Posterior vena cava (tissue), 2 donors: ENCODE measurements at regions of chr9 and their contacts with region 1.

Region 1: DNA sequence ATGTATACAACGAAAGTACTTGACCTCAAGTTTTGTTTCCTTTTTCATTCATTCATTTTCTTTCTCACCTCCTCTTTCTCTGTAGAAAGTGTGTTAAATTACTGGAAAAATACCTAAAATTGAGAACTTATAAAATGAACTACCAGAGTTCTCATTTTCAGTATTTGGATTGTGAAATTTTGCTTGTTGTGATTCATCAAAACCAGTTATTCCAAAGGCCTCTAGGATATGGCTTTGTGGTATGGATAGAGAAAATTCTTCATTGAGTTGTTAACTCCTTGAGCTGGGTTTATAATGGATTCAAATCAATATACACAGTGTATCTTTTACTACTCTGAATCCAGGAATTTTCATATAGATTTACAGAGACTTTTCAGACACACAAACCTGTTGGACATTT is 287.6 kb downstream of the KDM4C start:
- DNase-seq: no peak

Region 2: DNA sequence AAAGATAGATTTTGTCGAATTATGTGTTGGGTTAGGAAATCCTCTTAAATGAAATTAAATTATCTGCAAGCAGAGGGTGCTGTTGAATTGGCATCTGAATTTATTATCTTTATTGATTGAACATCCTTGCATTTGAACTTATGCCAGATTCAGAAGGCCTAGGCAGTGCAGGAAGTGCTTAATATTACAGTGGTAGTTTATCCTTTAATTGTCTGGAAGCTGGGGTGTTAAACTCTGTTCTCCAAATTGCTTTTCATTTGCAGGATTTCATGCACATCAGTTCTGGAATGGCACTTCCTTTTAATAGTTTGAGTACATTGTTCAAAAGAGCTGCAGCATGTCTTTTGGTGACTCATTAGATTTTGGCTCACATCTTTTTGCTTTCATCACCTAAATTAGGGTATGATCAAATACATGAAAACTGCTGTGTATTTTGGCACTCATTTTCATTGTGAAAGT is 101.2 kb before region 1 on chr9:
- intact Hi-C with region 1: no loop called
- DNase-seq: no peak

Region 3: GRCh38 chr9:7011395-7012067 is 33.8 kb before region 1 on chr9:
- intact Hi-C with region 1: no loop called
- DNase-seq: no peak

Region 4: GRCh38 chr9:7086389-7086788 is 41.0 kb after region 1 on chr9:
- intact Hi-C with region 1: loop called in 1 of 2 experiments (anchors 1 kb)
- DNase-seq: no peak